ENCODE measurements at regions of chr2 and their contacts with region 1.

Region 1: GRCh38 chr2:156341452-156342253 is 9.1 kb upstream of the NR4A2 start:
- DNase-seq: peak; percentile 56

Region 2: DNA sequence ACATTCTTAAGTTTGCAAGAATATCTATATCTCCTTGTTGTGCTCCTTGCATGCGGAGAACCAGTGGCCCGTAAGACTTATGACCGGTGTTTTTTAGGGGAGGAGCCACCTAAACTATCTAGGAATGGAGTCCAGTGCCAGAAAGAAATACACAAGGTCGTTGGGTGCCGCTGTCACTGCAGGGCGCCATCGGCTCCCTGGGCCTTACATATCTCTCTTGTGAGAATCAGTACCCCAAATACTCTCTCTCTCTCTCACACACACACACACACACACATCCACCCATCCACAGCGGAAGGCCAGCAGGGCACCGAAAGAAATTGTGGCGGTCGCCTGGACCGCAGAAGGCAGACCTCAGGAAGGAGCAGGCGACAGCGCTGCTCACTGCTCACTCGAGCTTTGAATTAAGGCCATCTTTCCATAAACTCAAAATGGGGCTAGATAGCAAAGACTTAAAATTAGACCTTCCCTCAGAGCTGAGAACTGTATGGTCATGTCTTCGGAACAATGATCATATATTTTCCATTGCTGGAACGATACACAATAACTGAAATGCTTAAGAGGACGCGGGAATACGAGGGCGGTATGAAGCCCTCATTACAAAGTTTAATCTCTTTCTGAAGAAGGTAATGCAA is 19.5 kb before region 1 on chr2:
- CTCF ChIA-PET with region 1: no interaction called
- POLR2A ChIA-PET with region 1: no interaction called
- DNase-seq: no peak

Region 3: DNA sequence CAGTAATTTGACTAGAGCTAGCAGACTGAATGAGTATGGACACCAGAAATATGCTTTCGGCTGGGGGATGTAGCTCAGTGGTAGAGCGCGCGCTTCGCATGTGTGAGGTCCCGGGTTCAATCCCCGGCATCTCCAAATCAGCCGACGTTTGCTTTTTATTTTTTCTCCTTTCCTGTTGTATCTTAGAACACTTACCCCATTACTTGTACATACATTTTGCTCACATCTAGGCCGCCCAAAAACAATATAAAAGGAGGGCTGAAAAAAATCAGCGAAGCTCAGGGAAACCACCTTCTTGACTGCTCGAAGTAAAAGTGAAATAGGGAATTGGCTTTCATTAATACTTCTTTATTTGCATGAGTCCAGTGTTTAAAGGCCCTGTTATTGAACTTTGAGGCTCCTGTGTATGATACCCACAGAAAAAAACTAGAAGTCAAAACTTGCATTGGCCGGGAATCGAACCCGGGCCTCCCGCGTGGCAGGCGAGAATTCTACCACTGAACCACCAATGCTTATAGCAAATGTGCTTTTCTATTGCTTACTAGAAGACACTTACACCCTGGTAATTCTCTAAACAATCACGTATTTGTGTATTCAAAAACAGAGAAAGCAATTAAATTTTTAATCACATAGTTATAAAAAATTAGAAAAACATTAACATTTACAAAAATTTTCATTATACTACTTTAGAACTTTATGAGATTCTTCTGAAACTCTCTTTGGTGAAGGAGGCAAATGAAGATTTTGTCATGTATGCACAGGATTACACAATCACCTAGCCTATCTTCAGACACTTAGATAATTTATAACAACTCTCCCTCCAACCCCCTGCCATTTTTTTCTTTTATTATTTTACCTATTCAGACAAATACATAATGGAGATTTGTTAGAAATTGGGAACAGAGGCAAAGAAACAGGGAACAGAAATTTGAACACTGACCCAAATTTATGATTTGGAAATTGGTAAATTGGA is 59.3 kb after region 1 on chr2:
- CTCF ChIA-PET with region 1: no interaction called
- POLR2A ChIA-PET with region 1: interaction called, 10 read pairs
- DNase-seq: peak; percentile 58